ENCODE measurements at regions of chrX and their contacts with region 1.

Region 1: DNA sequence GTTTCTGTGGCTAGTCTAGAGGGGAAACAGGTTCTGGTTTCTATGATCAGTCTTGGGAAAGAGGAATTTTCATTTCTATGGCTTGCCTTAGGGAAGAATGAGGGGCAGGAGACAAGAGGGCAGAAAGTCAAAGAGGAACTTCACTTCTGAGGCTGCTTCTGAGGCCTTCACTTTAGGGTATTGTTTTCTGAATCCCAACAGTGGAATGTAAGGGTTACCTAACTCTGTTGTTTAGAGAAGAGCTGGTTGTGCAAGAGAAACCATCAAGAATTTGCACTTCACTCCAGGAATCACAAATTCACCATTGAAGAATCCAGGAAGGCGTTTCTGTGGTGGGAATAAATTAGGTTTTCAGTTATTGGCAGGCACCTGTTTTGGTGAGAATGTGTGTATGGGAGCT is 126.7 kb upstream of the AMOT start:
- DNase-seq: peak; percentile 47 to 98
- H3K4me3 ChIP-seq: peak overlapping the region; percentile 38; the same call in 1 of the 2 replicates
- H3K27ac ChIP-seq: peak overlapping the region; percentile 99
- H3K4me1 ChIP-seq: peaks cover 54% of the 10 kb centered on the region
- H3K27me3 ChIP-seq: no peaks in the 10 kb centered on the region
- CTCF ChIP-seq: no peak

Region 2: DNA sequence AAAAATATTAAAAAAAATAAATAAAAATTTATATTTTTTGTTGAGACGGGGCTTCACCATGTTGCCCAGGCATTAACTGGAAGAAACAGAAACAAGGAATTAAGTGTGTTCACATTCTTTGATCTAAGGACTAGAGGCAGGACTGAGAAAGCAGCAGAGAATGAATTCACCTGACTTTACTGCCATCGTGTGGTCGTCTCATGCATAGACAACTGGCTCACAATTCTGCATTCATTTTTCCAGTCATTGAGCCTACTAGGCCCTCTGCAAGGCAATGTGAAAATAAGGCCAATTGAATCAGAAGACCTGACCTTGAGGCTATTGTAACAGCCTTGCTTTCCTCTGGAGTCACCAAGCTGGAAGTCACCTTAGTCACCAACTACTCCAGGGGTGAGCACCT is 325.0 kb before region 1 on chrX:
- CTCF ChIA-PET with region 1: no interaction called
- POLR2A ChIA-PET with region 1: no interaction called
- intact Hi-C with region 1: no loop called
- DNase-seq: peak; percentile 18 to 37
- H3K4me3 ChIP-seq: no peak overlapping the region
- H3K27ac ChIP-seq: no peak overlapping the region
- H3K4me1 ChIP-seq: no peaks in the 10 kb centered on the region
- H3K27me3 ChIP-seq: no peaks in the 10 kb centered on the region
- CTCF ChIP-seq: peak; percentile 72

Region 3: DNA sequence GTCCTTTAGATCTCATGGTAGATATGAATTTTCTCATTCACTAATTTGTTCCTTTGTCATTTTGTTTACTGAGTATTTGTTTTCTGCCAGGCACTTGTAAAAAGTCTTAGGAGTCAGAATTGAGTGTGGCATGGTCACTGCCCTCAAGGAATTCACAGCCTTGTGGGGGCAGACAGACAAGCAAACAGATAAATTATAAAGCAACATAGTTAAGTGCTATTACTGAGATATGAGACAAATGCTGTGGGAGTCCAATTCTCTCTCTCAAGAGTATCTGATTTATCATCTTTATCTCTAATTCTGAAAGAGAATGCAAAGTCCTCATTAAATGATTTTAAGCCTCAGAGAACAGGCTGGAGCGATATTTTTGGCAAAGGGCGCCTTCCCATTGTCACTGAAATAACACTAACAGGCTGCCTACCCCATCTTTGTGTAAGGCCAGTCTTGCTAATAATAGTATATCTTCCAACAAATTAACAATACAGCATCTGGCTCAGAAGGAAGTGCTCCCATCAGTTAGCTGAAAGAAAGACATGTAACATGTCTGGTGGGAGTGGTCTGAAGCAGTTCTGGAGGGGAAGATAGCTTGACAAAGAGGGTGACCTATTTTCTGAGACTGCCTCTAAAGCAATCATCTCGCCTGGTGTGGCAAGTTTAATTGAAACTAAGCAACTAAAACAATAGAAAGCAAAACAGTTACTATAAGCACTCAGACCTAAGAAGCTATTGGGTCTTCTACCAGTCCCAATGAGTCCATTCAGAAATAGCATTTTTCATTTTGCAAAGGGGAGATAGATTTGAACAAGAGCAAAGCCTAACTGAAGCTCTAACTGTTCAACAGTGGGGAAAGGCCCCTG is 65.2 kb before region 1 on chrX:
- CTCF ChIA-PET with region 1: no interaction called
- POLR2A ChIA-PET with region 1: no interaction called
- intact Hi-C with region 1: no loop called
- DNase-seq: no peak
- H3K4me3 ChIP-seq: no peak overlapping the region
- H3K27ac ChIP-seq: no peak overlapping the region
- H3K4me1 ChIP-seq: no peaks in the 10 kb centered on the region
- H3K27me3 ChIP-seq: no peaks in the 10 kb centered on the region
- CTCF ChIP-seq: no peak

Region 4: GRCh38 chrX:112947981-112948615 is 19.2 kb before region 1 on chrX:
- CTCF ChIA-PET with region 1: no interaction called
- POLR2A ChIA-PET with region 1: no interaction called
- intact Hi-C with region 1: loop called (anchors 2 kb)
- DNase-seq: peak in 1 of 2 experiments; percentile 57
- H3K4me3 ChIP-seq: no peak overlapping the region
- H3K27ac ChIP-seq: peak overlapping the region; percentile 36
- H3K4me1 ChIP-seq: peaks cover 18% of the 10 kb centered on the region
- H3K27me3 ChIP-seq: no peaks in the 10 kb centered on the region
- CTCF ChIP-seq: no peak

Region 5: DNA sequence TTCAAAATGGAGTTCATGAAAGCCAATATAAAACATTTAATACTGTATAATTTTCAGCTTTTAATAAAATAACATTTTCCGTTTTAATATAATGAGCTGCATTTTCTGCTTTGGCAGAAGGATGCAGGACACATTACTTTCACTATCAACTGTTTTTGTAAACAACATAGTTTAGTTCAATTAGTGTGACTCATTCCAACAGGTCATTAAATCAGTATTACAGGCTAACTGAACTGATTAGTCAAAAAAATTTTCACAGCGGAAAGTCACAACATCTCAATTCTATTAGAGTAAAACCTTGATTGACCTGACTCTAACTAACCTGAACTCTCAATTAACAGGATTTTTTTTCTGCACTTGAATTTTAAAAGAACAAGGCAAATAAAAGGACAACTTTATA is 24.5 kb after region 1 on chrX:
- CTCF ChIA-PET with region 1: no interaction called
- POLR2A ChIA-PET with region 1: no interaction called
- intact Hi-C with region 1: no loop called
- DNase-seq: no peak
- H3K4me3 ChIP-seq: no peak overlapping the region
- H3K27ac ChIP-seq: no peak overlapping the region
- H3K4me1 ChIP-seq: no peaks in the 10 kb centered on the region
- H3K27me3 ChIP-seq: no peaks in the 10 kb centered on the region
- CTCF ChIP-seq: no peak